ENCODE measurements at regions of chr11 and their contacts with region 1.

Region 1: GRCh38 chr11:66069715-66070603 is at the start of gene PACS1:
- DNase-seq: peak; percentile 34 to 85
- H3K4me3 ChIP-seq: peak within 1 kb of the TSS; percentile 43 to 90 (median 63)
- H3K27ac ChIP-seq: peak within 1 kb of the TSS; percentile 46
- H3K4me1 ChIP-seq: peaks cover 5 to 13% (median 8%) of the 10 kb centered on the region in 4 experiments; a peak in 6 of 7 replicates
- H3K27me3 ChIP-seq: no peaks in the 10 kb centered on the region
- CTCF ChIP-seq: no peak
- EP300 ChIP-seq: no peak
- POLR2A ChIP-seq: peak in 1 of 2 experiments; percentile 88; a peak in 1 of 3 replicates
- RAD21 ChIP-seq: no peak
- total RNA-seq, gene PACS1: 34.4 and 36.0 TPM in 2 replicates

Region 2: GRCh38 chr11:66035653-66036333 is 34.2 kb before region 1 on chr11:
- CTCF ChIA-PET with region 1: interaction called, 13 read pairs
- POLR2A ChIA-PET with region 1: no interaction called
- DNase-seq: no peak
- H3K4me3 ChIP-seq: no peak overlapping the region
- H3K27ac ChIP-seq: no peak overlapping the region
- H3K4me1 ChIP-seq: no peaks in the 10 kb centered on the region
- H3K27me3 ChIP-seq: no peaks in the 10 kb centered on the region
- CTCF ChIP-seq: no peak
- EP300 ChIP-seq: no peak
- POLR2A ChIP-seq: no peak
- RAD21 ChIP-seq: no peak

Region 3: DNA sequence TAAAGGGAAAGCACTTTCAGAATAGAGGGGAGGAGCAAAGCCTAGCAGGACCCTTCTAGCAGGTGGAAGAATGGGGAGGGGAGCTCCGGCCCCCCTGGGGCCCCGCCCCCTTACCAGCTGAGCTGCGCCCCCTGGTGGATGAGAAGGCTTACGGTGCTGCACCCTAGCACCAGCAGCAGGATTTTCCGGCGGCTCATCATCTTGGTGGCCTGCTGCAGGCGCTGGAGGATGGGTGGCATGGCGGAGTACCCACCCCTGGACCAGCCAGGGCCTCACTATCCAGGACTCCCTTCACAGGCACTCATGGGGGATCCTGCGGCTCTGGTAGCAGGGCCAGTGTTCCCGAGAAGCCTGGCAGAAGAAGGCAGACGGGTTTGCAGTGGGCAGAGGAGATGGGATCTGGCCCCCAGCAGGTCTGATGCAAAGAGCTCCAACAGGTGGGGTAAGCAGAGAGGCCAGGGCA is 24.8 kb before region 1 on chr11:
- CTCF ChIA-PET with region 1: interaction called, 144 read pairs
- POLR2A ChIA-PET with region 1: interaction called, 150 read pairs
- DNase-seq: peak; percentile 67 to 95
- H3K4me3 ChIP-seq: no peak overlapping the region
- H3K27ac ChIP-seq: no peak overlapping the region
- H3K4me1 ChIP-seq: peaks cover 0 to 21% (median 14%) of the 10 kb centered on the region in 4 experiments; a peak in 6 of 7 replicates
- H3K27me3 ChIP-seq: no peaks in the 10 kb centered on the region
- CTCF ChIP-seq: peak; percentile 95 to 97 (median 96)
- EP300 ChIP-seq: no peak
- POLR2A ChIP-seq: no peak
- RAD21 ChIP-seq: peak; percentile 44 to 63

Region 4: GRCh38 chr11:66051766-66052663 is 17.9 kb before region 1 on chr11 and contains the start of gene SF3B2:
- CTCF ChIA-PET with region 1: interaction called, 144 read pairs
- POLR2A ChIA-PET with region 1: interaction called, 150 read pairs
- DNase-seq: peak; percentile 90 to 96
- H3K4me3 ChIP-seq: peak within 1 kb of the TSS; percentile 97 to 99 (median 98)
- H3K27ac ChIP-seq: peak within 1 kb of the TSS; percentile 85
- H3K4me1 ChIP-seq: peaks cover 0 to 24% (median 19%) of the 10 kb centered on the region in 4 experiments; a peak in 6 of 7 replicates
- H3K27me3 ChIP-seq: no peaks in the 10 kb centered on the region
- CTCF ChIP-seq: peak in 1 of 3 experiments; percentile 1; a peak in 1 of 4 replicates
- EP300 ChIP-seq: peak in 1 of 2 experiments; percentile 33; a peak in 1 of 3 replicates
- POLR2A ChIP-seq: peak; percentile 60 to 83
- RAD21 ChIP-seq: no peak
- total RNA-seq, gene SF3B2: 231 and 237 TPM in 2 replicates

Region 5: GRCh38 chr11:66081505-66081904 is 11.5 kb after region 1 on chr11:
- CTCF ChIA-PET with region 1: interaction called, 16 read pairs
- POLR2A ChIA-PET with region 1: interaction called, 9 read pairs
- DNase-seq: no peak
- H3K4me3 ChIP-seq: no peak overlapping the region
- H3K27ac ChIP-seq: no peak overlapping the region
- H3K4me1 ChIP-seq: no peaks in the 10 kb centered on the region
- H3K27me3 ChIP-seq: no peaks in the 10 kb centered on the region
- CTCF ChIP-seq: no peak
- EP300 ChIP-seq: no peak
- POLR2A ChIP-seq: no peak
- RAD21 ChIP-seq: no peak

Region 6: DNA sequence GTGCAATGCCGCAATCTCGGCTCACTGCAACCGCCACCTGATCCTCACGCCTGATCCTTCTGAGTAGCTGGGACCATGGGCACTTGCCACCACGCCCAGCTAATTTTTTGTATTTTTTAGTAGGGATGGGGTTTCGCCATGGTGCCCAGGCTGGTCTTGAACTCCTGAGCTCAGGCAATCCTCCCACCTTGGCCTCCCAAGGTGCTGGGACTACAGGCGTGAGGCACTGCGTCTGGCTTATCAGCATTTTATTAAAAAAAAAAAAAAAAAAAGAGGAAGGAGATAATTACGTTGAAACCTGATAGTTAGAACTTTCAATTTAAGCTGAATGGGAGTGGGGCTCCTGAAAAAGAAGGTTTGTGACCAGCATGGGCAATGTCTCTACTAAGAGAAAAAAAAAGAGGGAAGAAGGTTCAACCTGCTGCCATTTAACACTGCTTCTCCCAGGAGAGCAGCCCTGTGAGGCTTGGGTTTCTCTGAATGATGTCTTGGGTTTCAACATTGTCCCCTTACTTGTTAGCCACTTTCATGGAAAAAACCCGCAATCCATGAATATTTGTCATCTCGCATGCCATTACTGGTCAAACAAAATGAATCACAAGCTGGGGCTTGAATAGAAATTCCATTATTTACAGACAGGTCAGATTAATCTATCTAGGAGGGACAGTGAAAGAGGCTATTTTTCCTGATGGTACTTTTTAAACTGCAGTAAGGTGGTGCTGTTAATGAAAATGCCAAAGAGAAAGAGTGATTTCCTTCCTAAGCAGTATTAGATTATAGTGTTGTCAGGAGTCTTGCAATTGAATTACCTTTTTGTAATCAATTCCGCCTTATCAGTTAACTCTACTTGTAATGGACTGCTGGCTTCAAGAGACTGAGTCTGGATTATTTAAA is 72.7 kb after region 1 on chr11:
- CTCF ChIA-PET with region 1: no interaction called
- POLR2A ChIA-PET with region 1: no interaction called
- DNase-seq: no peak
- H3K4me3 ChIP-seq: no peak overlapping the region
- H3K27ac ChIP-seq: no peak overlapping the region
- H3K4me1 ChIP-seq: no peaks in the 10 kb centered on the region
- H3K27me3 ChIP-seq: no peaks in the 10 kb centered on the region
- CTCF ChIP-seq: no peak
- EP300 ChIP-seq: no peak
- POLR2A ChIP-seq: no peak
- RAD21 ChIP-seq: no peak

Measured in H1 (cell line).